A549 (cell line): ENCODE measurements at regions of chr17 and their contacts with region 1.

Region 1: GRCh38 chr17:34412534-34412933 is 49.5 kb upstream of the CCL1 start:
- DNase-seq: no peak
- ATAC-seq: no peak
- H3K4me3 ChIP-seq: no peak overlapping the region
- H3K27ac ChIP-seq: peak overlapping the region; percentile 27 to 45; a peak in 2 of 6 replicates
- H3K4me1 ChIP-seq: peaks cover 10% of the 10 kb centered on the region; the same call in 1 of the 3 replicates
- CTCF ChIP-seq: no peak
- EP300 ChIP-seq: no peak
- POLR2A ChIP-seq: no peak
- RAD21 ChIP-seq: no peak

Region 2: GRCh38 chr17:34398990-34399389 is 13.5 kb before region 1 on chr17:
- CTCF ChIA-PET with region 1: interaction called, 12 read pairs
- POLR2A ChIA-PET with region 1: no interaction called
- DNase-seq: no peak
- ATAC-seq: no peak
- H3K4me3 ChIP-seq: no peak overlapping the region
- H3K27ac ChIP-seq: no peak overlapping the region
- H3K4me1 ChIP-seq: no peaks in the 10 kb centered on the region
- CTCF ChIP-seq: no peak
- EP300 ChIP-seq: no peak
- POLR2A ChIP-seq: no peak
- RAD21 ChIP-seq: no peak

Region 3: GRCh38 chr17:34464812-34465211 is 52.3 kb after region 1 on chr17:
- CTCF ChIA-PET with region 1: no interaction called
- POLR2A ChIA-PET with region 1: no interaction called
- DNase-seq: no peak
- ATAC-seq: no peak
- H3K4me3 ChIP-seq: no peak overlapping the region
- H3K27ac ChIP-seq: no peak overlapping the region
- H3K4me1 ChIP-seq: no peaks in the 10 kb centered on the region
- CTCF ChIP-seq: no peak
- EP300 ChIP-seq: no peak
- POLR2A ChIP-seq: no peak
- RAD21 ChIP-seq: no peak